Stomach (tissue), 19 donors: ENCODE measurements at regions of chr1 and their contacts with region 1.

Region 1: GRCh38 chr1:19651141-19651737 is 7.1 kb downstream of the NBL1 start:
- DNase-seq: peak; percentile 58 to 85
- H3K4me3 ChIP-seq: peak overlapping the region in 2 of 4 donors; percentile 9 to 17
- H3K27ac ChIP-seq: peak overlapping the region; percentile 9 to 96 (median 75)
- H3K4me1 ChIP-seq: peaks cover 48 to 83% (median 75%) of the 10 kb centered on the region in 4 donors
- H3K27me3 ChIP-seq: no peaks in the 10 kb centered on the region
- CTCF ChIP-seq: peak in 5 of 7 experiments; percentile 46 to 55 (median 53)
- EP300 ChIP-seq: no peak
- POLR2A ChIP-seq: no peak

Region 2: GRCh38 chr1:19341201-19342072 is 309.8 kb before region 1 on chr1:
- intact Hi-C with region 1: loop called (anchors 10 kb)
- DNase-seq: peak; percentile 74 to 85
- H3K4me3 ChIP-seq: no peak overlapping the region
- H3K27ac ChIP-seq: peak overlapping the region in 2 of 5 donors; percentile 4 to 41
- H3K4me1 ChIP-seq: peaks cover 3 to 44% (median 26%) of the 10 kb centered on the region in 4 donors
- H3K27me3 ChIP-seq: no peaks in the 10 kb centered on the region
- CTCF ChIP-seq: peak in 5 of 7 experiments; percentile 67 to 95 (median 82)
- EP300 ChIP-seq: no peak
- POLR2A ChIP-seq: no peak

Region 3: DNA sequence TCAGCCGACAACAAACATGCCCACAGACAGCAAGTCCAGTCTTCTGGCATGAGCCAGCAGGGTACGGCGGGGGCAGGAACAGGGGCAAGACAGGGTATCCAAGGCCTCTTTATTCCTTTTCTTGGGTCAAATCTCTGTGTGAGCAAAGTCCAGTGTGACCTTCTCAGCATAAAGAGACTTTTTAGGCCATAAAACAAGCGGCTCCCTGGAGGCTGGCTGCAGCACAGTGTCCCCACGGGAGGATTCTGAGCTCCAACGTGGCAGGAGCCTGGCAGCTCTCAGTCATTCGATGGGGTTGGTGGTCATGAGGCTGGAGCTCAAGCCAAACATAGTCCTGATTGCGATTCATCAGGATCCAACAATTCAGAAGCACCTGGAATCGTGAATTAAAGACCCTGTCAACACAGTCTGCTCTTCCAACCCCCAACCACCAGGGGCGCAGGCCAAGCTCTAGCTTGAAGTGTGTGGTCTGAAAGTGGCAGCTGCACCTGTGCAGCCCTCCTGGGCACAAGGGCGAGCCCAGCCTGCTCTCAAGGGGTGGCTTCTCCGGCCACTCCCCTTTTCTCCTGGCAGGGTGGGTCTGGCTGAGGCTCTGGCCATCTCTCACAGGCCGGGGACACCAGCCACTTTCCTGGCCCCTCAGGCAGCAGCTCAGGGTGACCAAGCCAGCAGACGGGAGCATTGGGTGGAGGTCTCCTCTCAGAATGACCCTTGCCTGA is 277.0 kb before region 1 on chr1:
- intact Hi-C with region 1: loop called (anchors 10 kb)
- DNase-seq: no peak
- H3K4me3 ChIP-seq: no peak overlapping the region
- H3K27ac ChIP-seq: peak overlapping the region in 2 of 5 donors; percentile 43 to 64
- H3K4me1 ChIP-seq: peaks cover 17 to 60% (median 42%) of the 10 kb centered on the region in 4 donors
- H3K27me3 ChIP-seq: no peaks in the 10 kb centered on the region
- CTCF ChIP-seq: no peak
- EP300 ChIP-seq: no peak
- POLR2A ChIP-seq: no peak

Region 4: DNA sequence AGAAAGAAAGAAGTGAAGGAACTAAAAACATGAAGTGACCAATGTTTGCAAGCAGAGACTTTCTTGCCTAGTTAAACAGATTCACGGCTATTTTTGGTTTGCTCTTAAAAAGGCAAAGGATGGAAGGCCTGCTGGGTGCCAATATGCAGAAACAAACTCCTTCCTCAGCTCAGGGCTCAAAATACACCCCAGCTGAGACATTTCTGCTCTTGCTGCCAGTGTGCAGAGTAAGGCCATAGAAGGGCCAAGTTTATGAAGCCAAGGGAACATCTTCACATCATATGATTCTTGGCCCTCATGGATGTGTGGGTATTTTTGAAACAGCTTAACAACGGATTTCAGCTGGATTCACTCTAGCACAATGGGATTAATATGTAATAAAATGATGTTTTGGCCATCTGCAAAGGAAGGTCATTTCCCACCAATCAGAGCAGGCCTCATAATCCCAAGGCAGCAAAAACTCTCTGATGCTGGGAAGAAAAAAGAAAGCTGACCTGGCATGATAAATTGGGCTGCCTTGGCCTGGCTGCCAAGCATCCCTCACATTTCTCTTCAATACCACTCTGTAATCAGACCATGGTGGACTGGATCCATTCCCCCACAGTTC is 236.6 kb before region 1 on chr1:
- intact Hi-C with region 1: no loop called
- DNase-seq: peak in 1 of 2 donors; percentile 76
- H3K4me3 ChIP-seq: no peak overlapping the region
- H3K27ac ChIP-seq: peak overlapping the region; percentile 43 to 87 (median 59)
- H3K4me1 ChIP-seq: peaks cover 53 to 97% (median 73%) of the 10 kb centered on the region in 4 donors
- H3K27me3 ChIP-seq: no peaks in the 10 kb centered on the region
- CTCF ChIP-seq: no peak
- EP300 ChIP-seq: no peak
- POLR2A ChIP-seq: no peak

Region 5: GRCh38 chr1:19700079-19700777 is 49.0 kb after region 1 on chr1:
- intact Hi-C with region 1: no loop called
- DNase-seq: no peak
- H3K4me3 ChIP-seq: no peak overlapping the region
- H3K27ac ChIP-seq: no peak overlapping the region
- H3K4me1 ChIP-seq: peaks cover 4 to 10% (median 7%) of the 10 kb centered on the region in 4 donors
- H3K27me3 ChIP-seq: no peaks in the 10 kb centered on the region
- CTCF ChIP-seq: no peak
- EP300 ChIP-seq: no peak
- POLR2A ChIP-seq: no peak

Region 6: GRCh38 chr1:19710825-19711611 is 59.8 kb after region 1 on chr1:
- intact Hi-C with region 1: no loop called
- DNase-seq: no peak
- H3K4me3 ChIP-seq: no peak overlapping the region
- H3K27ac ChIP-seq: no peak overlapping the region
- H3K4me1 ChIP-seq: peaks cover 0 to 9% (median 0%) of the 10 kb centered on the region in 4 donors
- H3K27me3 ChIP-seq: no peaks in the 10 kb centered on the region
- CTCF ChIP-seq: no peak
- EP300 ChIP-seq: no peak
- POLR2A ChIP-seq: no peak